ENCODE measurements at regions of chr18 and their contacts with region 1.

Region 1: DNA sequence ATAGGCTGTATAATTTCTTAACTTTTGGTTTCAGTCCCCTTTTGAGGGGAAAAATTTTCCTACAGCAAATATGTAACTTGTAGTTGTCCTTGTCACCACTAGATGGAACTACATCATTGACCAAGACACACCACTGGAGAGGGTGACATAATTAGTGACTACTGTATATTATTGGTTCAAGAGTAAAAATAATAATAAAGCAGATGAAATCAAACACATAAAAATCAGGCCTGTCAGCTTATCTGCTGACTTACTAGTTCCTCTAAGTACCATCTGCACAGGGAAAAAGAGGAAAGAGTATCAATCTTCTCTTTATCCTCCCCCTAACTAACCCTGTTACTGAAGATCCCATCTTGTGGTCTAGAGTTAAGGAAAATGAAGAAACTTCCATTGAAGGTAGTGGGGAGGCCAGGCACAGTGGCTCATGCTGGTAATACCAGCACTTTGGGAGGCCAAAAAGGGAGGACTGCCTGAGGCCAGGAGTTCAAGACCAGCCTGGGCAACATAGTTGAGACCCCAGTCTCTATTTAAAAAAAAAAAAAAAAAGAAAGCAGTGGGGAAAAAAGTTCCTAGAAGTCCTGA is 29.6 kb upstream of the ENOSF1 start:
- DNase-seq: peak; percentile 73
- H3K4me3 ChIP-seq: no peak overlapping the region
- H3K27ac ChIP-seq: no peak overlapping the region
- H3K4me1 ChIP-seq: peaks cover 14% of the 10 kb centered on the region
- H3K27me3 ChIP-seq: no peaks in the 10 kb centered on the region
- CTCF ChIP-seq: peak; percentile 80

Region 2: DNA sequence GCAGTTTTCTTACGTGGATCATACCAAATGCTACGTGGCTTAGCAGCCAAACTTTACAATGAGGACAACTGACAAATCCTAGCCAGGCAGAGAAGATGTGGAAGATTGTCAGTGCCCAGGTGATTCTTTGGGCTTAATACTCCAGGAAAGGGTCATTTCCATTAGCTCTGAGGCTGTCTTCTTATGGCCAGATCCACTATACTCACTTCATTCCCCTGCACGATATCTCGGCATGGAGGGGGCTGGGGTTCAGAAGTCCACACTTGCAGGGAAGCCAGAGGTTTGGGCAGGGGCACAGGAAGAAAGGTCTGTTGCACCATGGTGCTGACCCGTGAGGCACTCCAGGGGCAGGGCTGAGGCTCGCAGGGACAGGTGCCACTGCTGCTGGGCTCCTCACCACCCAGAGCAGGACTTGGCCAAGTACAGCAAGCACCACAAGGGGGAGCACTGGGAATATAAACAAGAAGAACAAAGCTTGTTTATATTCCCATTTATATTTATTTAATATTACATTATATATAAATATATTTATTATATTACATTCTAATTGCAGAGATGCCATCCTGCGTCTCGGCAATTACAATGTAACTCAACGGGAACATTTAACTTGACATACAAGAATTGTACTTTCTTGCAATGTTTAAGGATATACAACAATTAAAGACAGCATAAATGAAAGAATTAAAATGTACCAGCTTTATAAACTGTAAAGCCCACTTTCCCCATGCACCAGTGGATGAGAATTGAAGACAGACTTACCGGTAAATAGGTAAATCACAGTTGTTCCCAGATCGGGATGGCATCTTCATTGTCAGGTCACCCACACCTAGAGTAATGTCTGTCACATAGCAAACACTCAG is 118.0 kb before region 1 on chr18:
- CTCF ChIA-PET with region 1: no interaction called
- POLR2A ChIA-PET with region 1: no interaction called
- intact Hi-C with region 1: loop called (anchors 5 kb)
- DNase-seq: peak; percentile 72
- H3K4me3 ChIP-seq: no peak overlapping the region
- H3K27ac ChIP-seq: no peak overlapping the region
- H3K4me1 ChIP-seq: peaks cover 14% of the 10 kb centered on the region
- H3K27me3 ChIP-seq: no peaks in the 10 kb centered on the region
- CTCF ChIP-seq: peak; percentile 75